Lower leg skin (tissue), 4 donors: ENCODE measurements at regions of chr1 and their contacts with region 1.

Region 1: DNA sequence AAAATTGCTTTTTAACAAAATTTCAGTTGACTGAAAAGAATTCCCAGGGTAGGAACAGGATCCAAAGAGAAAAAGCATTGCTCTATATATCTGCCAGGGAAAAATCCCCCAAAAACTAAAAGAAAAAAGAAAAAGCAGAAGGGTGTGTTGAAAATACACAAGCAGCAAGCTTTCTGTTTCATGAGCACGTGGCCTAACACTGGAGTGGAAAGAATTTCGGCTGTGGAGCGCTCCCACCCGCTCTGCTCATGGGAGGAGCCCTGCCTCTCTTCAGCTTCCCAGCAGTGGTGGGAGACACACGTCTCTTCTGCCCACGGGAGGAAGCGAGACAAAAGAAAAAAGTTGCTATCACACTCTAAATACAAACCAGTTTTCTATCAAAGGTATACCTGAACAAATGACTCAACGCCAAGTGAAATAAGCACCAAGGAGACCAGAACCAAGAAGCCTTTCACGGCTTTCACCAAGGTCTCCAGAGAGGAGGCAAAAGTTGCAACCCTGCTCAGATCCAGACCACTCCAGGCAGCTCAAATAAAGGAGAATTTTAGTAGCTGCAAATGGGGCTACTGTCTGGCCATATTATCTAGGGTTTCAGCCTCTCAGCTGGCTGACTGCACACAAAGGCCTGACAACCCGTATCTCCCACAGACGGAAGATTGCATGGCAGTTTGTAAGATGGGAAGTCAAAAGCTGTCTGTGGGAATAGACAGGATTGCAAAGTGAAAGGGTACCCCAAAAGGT is 29.5 kb upstream of the ZNF496 start:
- DNase-seq: no peak
- H3K4me3 ChIP-seq: no peak overlapping the region
- CTCF ChIP-seq: no peak
- POLR2A ChIP-seq: no peak

Region 2: GRCh38 chr1:246987083-246987690 is 374.0 kb before region 1 on chr1:
- intact Hi-C with region 1: loop called (anchors 10 kb)
- DNase-seq: no peak
- H3K4me3 ChIP-seq: no peak overlapping the region
- CTCF ChIP-seq: no peak
- POLR2A ChIP-seq: no peak

Region 3: DNA sequence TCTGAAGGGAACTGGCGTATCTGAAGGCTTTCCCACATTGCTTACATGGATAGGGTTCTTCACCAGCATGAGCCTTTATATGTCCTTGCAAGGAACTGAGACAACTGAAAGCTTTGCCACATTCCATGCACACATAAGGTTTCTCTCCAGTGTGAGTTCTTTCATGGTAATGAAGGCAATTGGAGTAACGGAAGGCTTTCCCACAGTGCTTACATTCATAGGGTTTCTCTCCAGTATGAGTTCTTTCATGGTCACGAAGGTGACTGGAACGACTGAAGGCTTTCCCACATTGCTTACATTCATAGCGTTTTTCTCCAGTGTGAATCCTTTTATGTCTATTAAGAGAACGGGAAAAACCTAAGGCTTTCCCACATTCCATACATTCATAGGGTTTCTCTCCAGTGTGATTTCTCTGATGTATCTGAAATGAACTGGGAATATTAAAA is 204.4 kb before region 1 on chr1:
- intact Hi-C with region 1: no loop called
- DNase-seq: no peak
- H3K4me3 ChIP-seq: no peak overlapping the region
- CTCF ChIP-seq: no peak
- POLR2A ChIP-seq: no peak

Region 4: DNA sequence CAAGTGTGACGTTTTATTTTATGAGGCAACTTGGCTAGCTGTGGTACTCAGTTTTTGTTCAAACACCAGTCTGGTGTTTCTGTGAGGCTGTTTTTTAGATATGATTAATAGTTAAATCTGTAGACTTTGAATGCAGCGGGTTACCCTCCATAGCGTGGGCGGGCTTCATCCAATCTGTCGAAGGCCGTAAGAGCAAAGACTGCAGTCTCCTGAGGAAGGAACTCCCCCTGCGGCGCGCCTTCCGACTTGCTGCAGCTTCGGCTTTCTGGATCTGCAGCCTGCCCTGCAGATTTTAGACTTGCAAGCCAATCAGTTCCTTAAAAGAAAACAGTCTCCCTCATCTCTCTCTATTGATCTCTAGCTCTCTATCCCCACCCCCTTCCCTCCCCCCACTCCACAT is 25.3 kb before region 1 on chr1:
- intact Hi-C with region 1: no loop called
- DNase-seq: no peak
- H3K4me3 ChIP-seq: no peak overlapping the region
- CTCF ChIP-seq: no peak
- POLR2A ChIP-seq: no peak

Region 5: DNA sequence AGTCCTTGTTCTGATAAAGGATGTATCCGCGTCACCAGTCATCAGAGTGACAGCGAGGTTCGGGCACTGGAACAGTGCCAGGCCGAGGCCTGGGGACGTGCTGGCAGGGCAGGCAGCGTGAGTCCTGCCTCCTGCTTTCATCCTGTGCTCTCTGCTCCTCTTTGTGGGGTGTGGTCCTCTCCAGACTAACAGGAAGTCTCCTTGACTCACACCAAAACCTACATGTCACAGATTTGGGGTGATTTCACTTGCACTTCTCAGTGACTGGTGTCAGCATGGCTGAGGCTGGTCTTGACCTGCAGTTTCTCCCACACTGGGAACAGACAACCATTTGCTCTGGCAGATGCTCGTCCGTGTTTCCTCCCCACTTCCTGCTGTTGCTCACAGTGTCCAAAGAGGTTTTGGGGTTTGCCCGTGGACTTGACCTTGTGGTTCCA is 46.0 kb after region 1 on chr1:
- intact Hi-C with region 1: no loop called
- DNase-seq: peak in 1 of 2 donors; percentile 21
- H3K4me3 ChIP-seq: no peak overlapping the region
- CTCF ChIP-seq: no peak
- POLR2A ChIP-seq: no peak